ENCODE measurements at regions of chr9 and their contacts with region 1.

Region 1: DNA sequence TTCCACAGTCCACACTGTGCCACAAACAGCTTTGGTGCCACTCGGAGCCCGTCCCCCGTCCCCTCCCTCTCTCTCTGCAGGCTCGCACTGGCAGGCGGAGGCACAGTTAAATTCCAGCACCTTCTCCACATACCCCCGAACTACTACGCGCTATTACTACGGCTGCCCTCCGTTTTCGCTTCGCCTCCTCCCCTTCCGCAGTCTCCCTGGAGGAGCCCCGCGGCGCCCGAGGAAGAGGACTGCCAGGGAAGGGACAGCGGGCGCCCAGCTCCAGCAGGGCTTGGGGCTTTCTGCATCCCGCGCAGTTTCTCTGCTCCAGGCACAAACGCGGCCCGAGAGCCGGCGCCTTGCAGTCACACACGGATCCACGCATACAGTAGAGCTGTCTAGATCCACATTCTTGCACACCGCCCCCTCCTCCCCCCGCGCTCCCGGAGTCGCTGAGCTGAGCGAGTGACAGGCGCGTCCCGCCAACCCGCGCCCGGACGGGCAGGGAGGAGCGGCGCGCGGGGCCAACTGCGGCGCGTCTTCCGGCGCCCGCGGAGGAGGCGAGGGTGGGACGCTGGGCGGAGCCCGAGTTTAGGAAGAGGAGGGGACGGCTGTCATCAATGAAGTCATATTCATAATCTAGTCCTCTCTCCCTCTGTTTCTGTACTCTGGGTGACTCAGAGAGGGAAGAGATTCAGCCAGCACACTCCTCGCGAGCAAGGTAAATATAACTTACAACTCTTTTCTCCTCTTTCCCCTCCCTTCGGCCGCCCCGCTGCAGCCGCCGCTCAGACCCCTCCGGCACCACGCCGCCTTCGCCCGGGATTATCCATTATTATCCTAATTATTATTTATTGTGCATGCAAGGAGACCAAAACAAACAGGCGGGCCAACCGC is at the start of gene SMARCA2:
- DNase-seq: peak; percentile 98 to 99 (median 98)
- ATAC-seq: peak; percentile 87 to 93 (median 90)
- H3K4me3 ChIP-seq: peak within 1 kb of the TSS; percentile 54 to 97 (median 88)
- H3K27ac ChIP-seq: peak within 1 kb of the TSS; percentile 92 to 99 (median 97)
- H3K4me1 ChIP-seq: peaks cover 0 to 32% (median 23%) of the 10 kb centered on the region in 12 donors
- H3K27me3 ChIP-seq: no peaks in the 10 kb centered on the region
- CTCF ChIP-seq: no peak
- POLR2A ChIP-seq: peak; percentile 60 to 95
- total RNA-seq, gene SMARCA2: 88.0 to 149 (median 115) TPM

Region 2: DNA sequence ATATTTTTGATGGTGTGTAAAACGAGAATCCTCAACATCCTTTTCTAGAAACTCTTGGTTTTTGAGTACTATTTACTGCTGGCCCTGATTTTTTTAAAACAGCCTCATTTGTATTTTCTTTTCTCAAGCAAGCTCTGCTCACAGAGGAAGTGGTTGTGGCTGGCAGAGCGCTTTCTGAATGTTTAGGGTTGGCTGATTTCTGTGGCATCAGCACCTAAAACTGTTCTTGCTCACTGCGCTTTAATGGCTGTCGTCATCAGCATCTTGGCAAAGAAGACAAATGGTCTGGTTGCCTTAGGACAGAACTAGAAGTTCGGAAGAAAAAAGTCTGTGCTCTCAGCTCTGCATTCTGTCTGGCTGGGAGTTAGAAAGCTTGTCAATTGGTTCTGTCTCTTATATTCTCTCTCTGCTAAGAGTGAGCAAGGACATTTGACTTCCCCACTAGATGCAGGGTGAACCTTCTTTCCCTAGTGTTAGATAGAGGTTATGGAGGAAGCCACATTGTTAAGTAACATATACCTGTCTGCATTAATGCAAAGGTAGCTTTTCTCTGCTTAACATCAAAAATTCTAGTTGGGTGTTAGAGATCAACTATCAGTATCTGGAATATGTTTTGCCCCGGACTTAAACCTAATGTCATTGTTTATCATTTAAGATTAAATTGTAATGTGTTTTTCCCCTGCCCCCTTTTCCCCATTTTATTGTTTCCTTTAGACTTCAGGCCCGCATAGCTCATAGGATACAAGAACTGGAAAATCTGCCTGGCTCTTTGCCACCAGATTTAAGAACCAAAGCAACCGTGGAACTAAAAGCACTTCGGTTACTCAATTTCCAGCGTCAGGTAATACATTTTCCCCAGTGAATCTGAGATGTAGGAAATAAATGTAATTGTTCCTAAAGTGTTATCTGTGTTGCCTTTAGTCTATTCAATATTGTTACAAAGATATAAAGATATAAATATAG is 39.2 kb after region 1 on chr9:
- intact Hi-C with region 1: loop called in 2 of 10 experiments (anchors 5 kb)
- DNase-seq: no peak
- ATAC-seq: peak in 2 of 4 donors; percentile 50
- H3K4me3 ChIP-seq: no peak overlapping the region
- H3K27ac ChIP-seq: peak overlapping the region in 2 of 12 donors; percentile 58 to 66
- H3K4me1 ChIP-seq: peaks cover 0 to 20% (median under 1%) of the 10 kb centered on the region in 12 donors
- H3K27me3 ChIP-seq: no peaks in the 10 kb centered on the region
- CTCF ChIP-seq: no peak
- POLR2A ChIP-seq: no peak

Region 3: DNA sequence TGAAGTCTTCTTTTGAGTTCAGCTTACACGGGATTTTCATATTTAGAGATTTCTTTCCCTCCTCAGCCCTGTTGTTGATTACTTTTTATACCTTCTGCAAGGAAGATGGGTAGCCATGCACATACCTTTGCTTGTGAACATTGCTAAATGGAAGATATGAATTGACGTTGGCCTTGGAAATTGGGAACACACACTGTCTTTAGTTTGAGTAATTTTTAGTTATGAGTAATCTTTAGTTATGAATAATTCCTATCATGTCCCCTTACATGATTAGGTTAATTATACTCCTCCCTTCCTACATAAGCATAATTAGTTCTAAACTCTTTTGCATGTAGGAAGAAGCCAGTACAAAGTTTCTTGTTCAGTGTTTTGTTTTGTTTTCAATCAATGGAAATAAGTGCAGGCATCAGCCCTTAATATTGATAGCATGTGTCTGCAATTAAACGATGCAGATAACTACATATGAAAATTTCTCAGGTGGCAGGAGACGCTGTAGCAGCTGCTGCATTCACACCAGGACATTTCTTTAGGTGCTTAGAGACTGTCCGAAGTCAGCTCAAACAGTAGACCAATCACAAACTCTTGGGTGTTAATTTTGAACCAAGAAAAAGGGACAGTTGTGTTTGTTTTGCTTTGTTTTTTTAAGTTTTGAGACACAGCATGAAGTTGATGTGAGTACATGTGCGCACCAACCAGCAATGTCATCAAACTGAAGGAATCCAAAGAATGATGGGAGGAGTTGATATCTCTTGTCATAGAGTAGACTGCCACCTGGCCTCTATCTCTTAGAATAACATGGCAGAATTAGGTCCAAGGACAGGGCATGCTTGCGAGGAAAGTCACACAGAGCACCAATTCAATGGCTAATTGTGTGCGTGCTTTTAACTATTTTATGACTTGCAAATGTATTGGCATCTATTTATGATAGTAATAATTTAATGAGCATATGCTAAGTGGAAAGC is 51.7 kb after region 1 on chr9:
- intact Hi-C with region 1: loop called in 4 of 10 experiments (anchors 2 to 10 kb)
- DNase-seq: no peak
- ATAC-seq: peak in 2 of 4 donors; percentile 50 to 68
- H3K4me3 ChIP-seq: no peak overlapping the region
- H3K27ac ChIP-seq: no peak overlapping the region
- H3K4me1 ChIP-seq: no peaks in the 10 kb centered on the region
- H3K27me3 ChIP-seq: no peaks in the 10 kb centered on the region
- CTCF ChIP-seq: peak in 10 of 12 donors; percentile 8 to 47 (median 31)
- POLR2A ChIP-seq: no peak

Region 4: GRCh38 chr9:2849941-2850340 is 835.0 kb after region 1 on chr9:
- intact Hi-C with region 1: loop called in 1 of 10 experiments (anchors 10 kb)
- DNase-seq: no peak
- ATAC-seq: no peak
- H3K4me3 ChIP-seq: no peak overlapping the region
- H3K27ac ChIP-seq: no peak overlapping the region
- H3K4me1 ChIP-seq: peaks cover 0 to 12% (median 7%) of the 10 kb centered on the region in 12 donors
- H3K27me3 ChIP-seq: no peaks in the 10 kb centered on the region
- CTCF ChIP-seq: no peak
- POLR2A ChIP-seq: no peak